OCI-LY7 (cell line): ENCODE measurements at regions of chr4 and their contacts with region 1.

Region 1: DNA sequence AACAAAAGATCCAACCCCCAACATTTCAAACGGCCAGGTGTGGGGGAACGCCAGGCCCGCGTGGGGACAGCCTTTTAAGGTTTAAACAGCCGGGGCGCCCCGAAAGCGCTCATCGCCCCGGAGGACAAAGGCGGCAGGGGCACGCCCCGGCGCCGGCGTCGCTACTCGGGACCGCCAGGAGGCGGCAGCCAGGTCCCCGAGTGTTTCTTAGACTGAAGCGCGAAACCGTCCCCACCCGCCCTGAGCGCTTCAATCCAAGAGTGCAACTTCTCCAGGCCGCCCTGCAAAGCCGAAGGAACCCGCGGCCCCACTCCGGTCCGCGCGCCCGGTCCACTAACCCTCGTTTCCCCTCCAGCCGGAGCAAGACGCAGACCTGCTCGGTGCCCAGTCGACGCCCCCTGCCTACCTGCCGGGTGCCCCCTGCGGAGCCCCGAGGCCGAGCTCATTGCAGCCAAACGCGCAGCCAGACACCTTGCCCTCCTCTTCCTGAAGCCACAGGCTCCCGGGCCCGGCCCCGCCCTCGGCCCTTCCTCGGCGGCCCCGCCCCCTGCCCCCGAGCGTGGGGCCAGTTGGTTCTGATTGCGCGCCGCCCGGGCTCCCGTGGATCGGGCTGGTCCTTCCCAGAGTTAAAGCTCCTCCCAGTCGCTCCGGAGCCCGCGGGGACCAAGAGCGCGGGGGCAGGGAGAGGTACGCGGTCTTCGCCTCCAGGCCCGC is at the start of gene CASP6:
- DNase-seq: peak; percentile 80
- H3K4me3 ChIP-seq: peak within 1 kb of the TSS; percentile 75
- H3K27ac ChIP-seq: no peak within 1 kb of the TSS
- H3K4me1 ChIP-seq: peaks cover 18% of the 10 kb centered on the region
- CTCF ChIP-seq: peak; percentile 75
- total RNA-seq, gene CASP6: 8.1 and 10.1 TPM in 2 replicates

Region 2: GRCh38 chr4:109511414-109511813 is 191.7 kb before region 1 on chr4:
- CTCF ChIA-PET with region 1: no interaction called
- POLR2A ChIA-PET with region 1: no interaction called
- intact Hi-C with region 1: no loop called
- DNase-seq: no peak
- H3K4me3 ChIP-seq: no peak overlapping the region
- H3K27ac ChIP-seq: no peak overlapping the region
- H3K4me1 ChIP-seq: no peaks in the 10 kb centered on the region
- CTCF ChIP-seq: no peak

Region 3: DNA sequence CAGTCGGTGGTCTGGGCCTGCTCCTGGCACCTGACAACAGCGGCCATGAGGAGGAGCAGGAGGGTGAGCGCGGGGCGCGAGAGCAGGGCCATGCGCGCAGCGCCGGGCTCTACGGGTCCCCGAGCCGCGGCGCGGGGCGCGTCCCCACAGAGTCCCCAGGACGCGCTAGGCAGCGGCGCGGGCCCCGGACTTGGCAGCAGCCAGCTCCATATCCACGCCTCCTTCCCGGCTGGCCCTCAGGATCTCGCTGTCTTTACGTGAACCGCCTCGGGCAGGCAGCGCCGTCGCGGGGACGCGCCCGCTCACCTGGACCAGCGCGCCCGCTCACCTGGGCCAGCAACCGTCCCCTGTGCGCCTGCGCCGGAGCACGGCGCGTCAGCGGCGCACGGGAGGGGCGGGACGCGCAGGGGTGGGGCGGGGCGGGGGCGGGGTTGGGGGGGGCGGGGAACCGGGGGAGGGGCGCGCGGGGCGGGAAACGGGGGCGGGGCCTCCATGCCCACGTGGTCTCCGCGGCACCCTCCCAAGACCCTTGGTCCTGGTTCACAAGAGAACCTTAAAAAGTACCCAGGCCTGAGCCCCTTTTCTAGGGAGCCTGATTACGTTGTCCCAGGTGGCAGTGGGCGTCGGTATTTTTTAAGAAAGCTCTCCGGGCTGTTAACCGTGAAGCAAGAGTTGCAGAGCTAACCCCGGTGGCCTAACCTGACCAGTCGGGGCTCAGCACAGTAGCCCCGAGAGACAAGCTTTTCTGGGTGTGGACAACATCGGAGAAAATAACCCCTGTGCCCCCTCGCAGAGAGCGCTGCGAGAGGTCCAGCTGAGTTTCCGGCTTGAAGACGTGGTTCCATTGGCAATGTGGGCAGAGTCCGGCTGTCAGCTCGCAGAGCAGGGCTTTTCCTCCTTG is 26.9 kb after region 1 on chr4 and contains the start of gene PLA2G12A:
- CTCF ChIA-PET with region 1: no interaction called
- POLR2A ChIA-PET with region 1: interaction called, 4 read pairs
- intact Hi-C with region 1: loop called (anchors 2 kb)
- DNase-seq: peak; percentile 85
- H3K4me3 ChIP-seq: peak within 1 kb of the TSS; percentile 79
- H3K27ac ChIP-seq: no peak within 1 kb of the TSS
- H3K4me1 ChIP-seq: peaks cover 21% of the 10 kb centered on the region
- CTCF ChIP-seq: no peak
- total RNA-seq, gene PLA2G12A: 9.0 and 18.1 TPM in 2 replicates

Region 4: GRCh38 chr4:109803924-109804571 is 100.9 kb after region 1 on chr4:
- CTCF ChIA-PET with region 1: no interaction called
- POLR2A ChIA-PET with region 1: no interaction called
- intact Hi-C with region 1: loop called (anchors 2 kb)
- DNase-seq: peak; percentile 64
- H3K4me3 ChIP-seq: no peak overlapping the region
- H3K27ac ChIP-seq: no peak overlapping the region
- H3K4me1 ChIP-seq: no peaks in the 10 kb centered on the region
- CTCF ChIP-seq: peak; percentile 76

Region 5: GRCh38 chr4:109815151-109816081 is 112.3 kb after region 1 on chr4 and contains the start of gene GAR1:
- CTCF ChIA-PET with region 1: no interaction called
- POLR2A ChIA-PET with region 1: interaction called, 3 read pairs
- intact Hi-C with region 1: loop called (anchors 5 kb)
- DNase-seq: peak; percentile 95
- H3K4me3 ChIP-seq: peak within 1 kb of the TSS; percentile 83
- H3K27ac ChIP-seq: peak within 1 kb of the TSS; percentile 65
- H3K4me1 ChIP-seq: peaks cover 22% of the 10 kb centered on the region
- CTCF ChIP-seq: no peak
- total RNA-seq, gene GAR1: 16.4 and 26.7 TPM in 2 replicates

Region 6: DNA sequence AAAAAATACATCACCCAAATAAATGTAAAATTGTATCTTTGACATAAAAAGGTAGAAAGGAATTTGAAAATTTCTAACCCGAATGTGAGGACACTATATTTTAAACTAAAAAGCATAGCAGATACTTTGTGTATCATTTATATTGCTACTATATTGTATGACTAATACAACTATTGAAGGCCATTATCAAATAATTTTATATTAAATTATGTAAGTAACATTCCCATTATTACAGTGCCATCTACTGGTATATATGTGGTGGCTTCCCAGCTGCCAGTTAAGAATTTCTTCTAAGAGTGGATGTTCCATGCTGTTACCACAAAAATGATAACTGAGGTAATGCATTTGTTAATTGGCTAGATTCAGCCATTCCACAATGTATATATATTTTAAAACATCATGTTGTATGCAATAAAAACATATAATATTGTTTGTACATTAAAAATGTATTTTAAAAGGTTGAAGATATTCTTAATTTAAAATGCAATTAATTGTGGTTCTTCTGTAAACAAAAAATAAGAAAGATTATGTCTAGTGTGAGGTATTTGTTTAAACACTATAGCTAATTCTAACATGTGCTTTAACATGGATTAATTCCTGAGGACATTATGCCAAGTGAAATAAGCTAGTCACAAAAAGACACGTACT is 274.9 kb after region 1 on chr4:
- CTCF ChIA-PET with region 1: no interaction called
- POLR2A ChIA-PET with region 1: no interaction called
- intact Hi-C with region 1: loop called (anchors 1 kb)
- DNase-seq: peak; percentile 62
- H3K4me3 ChIP-seq: no peak overlapping the region
- H3K27ac ChIP-seq: no peak overlapping the region
- H3K4me1 ChIP-seq: peaks cover 7% of the 10 kb centered on the region
- CTCF ChIP-seq: peak; percentile 89